Right ventricle myocardium superior (tissue), 1 donor: ENCODE measurements at regions of chr10 and their contacts with region 1.

Region 1: GRCh38 chr10:80136081-80136571 is 3.6 kb downstream of the PLAC9 start:
- DNase-seq: peak; percentile 97
- ATAC-seq: peak; percentile 74

Region 2: GRCh38 chr10:80078448-80079311 is 57.4 kb before region 1 on chr10 and contains the start of gene TMEM254:
- intact Hi-C with region 1: loop called (anchors 10 kb)
- DNase-seq: peak; percentile 97
- ATAC-seq: peak; percentile 98
- total RNA-seq, gene TMEM254: 7.6 TPM